ENCODE measurements at regions of chr22 and their contacts with region 1.

Region 1: GRCh38 chr22:28600546-28601143 is 79.0 kb downstream of the TTC28 start:
- DNase-seq: no peak
- H3K4me3 Mint-ChIP-seq: no peak overlapping the region
- H3K27ac Mint-ChIP-seq: no peak overlapping the region
- H3K4me1 Mint-ChIP-seq: no peaks in the 10 kb centered on the region
- H3K27me3 Mint-ChIP-seq: peaks cover 10% of the 10 kb centered on the region

Region 2: DNA sequence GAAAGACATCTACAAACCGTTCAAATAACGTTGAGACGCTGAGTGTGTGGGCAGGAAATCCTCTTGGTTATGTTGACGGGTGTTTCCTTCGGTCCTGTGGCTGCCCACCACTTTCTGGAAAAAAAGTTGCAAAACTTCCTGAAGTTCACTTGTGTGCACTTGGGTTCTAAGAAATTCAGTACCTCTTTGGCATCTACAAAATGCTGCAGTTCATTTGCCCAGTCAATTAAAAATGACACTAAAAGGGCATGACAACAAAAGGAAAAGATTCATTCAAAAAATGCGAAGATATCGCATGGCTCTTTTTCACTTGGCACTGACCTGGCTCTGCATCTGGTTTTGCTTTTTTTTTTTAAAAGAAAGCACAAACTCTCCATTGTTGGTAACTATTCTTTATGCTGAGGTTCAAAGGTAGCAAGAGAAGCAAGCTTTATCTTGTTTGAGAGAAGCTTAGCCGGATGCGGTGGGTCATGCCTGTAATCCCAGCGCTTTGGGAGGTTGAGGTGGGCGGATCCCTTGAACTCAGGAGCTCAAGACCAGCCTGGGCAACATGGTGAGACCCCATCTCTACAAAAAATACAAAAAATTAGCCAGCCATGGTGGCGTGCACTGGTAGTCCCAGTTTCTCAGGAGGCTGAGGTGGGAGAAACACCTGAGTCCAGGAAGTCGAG is 210.3 kb after region 1 on chr22:
- CTCF ChIA-PET with region 1: interaction called, 10 read pairs
- POLR2A ChIA-PET with region 1: no interaction called
- intact Hi-C with region 1: no loop called
- DNase-seq: peak; percentile 60
- H3K4me3 Mint-ChIP-seq: peak overlapping the region; percentile 64
- H3K27ac Mint-ChIP-seq: peak overlapping the region; percentile 84
- H3K4me1 Mint-ChIP-seq: peaks cover 65% of the 10 kb centered on the region
- H3K27me3 Mint-ChIP-seq: no peaks in the 10 kb centered on the region

Measured in activated CD4-positive, alpha-beta memory T cell treated with anti-CD3 and anti-CD28 coated beads for 36 hours (primary cell).